ENCODE measurements at regions of chr6 and their contacts with region 1.

Region 1: DNA sequence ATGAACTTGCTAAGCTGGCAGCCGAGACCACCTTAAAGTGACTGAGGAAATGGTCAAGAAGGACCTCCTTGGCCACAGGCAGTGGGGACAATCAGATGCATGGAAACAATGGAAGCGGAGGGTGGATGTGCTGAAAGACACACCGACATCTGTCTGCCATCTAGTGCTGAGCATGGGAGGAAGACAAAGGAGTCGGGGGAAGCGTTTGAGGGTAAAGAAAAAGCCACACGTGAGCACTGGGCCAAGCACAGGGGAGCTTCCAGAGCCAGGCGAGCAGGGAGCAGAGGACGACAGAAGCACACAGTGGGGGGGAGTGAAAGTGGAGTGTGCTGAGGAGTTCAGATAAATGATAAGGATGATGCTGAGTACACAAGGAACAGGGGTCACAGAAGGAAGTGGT is 367.8 kb downstream of the ZFAND3 start:
- DNase-seq: peak in 3 of 10 donors; percentile 17 to 42 (median 37)
- H3K4me3 ChIP-seq: no peak overlapping the region
- H3K27ac ChIP-seq: peak overlapping the region in 7 of 59 donors; percentile 14 to 46 (median 29)
- H3K27me3 ChIP-seq: no peaks in the 10 kb centered on the region
- CTCF ChIP-seq: peak in 30 of 56 donors; percentile 7 to 62 (median 28)

Region 2: DNA sequence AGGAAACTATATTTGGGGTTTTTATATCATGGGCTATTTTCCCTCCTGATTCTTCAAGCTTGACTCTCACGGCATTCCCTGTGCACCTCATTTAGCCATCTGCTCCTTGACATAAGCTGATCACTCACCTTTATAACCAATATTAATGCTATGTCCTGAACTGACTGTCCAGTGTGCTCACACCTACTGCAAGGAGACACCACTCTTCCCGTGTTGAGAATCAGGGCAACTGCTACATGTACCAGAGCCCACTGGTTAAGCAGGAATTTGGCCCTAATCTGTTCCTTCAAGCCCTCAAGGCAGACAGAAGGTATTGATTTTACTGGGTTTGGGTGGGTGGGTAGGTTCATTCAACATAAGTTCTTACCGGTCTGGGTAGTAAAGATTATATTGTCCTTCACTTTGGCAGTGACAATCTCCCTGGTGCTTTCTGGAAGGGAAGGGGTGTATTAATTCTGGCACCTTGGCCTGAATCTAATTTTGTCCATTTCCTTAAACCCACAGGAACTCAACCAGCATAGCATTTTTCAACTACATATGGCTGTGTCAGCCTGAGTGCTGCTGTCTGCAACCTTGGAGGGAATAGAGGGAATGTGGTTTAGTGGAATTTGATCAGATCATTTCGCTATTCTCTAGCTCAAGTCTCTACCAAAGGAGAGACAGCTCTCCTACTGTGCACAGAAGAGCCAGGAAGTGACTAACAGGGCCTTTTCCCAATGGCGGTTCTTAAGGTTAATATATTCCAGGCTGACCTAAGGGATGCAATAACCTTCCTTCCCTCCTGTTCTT is 159.2 kb after region 1 on chr6:
- intact Hi-C with region 1: loop called in 1 of 2 experiments (anchors 10 kb)
- DNase-seq: no peak
- H3K4me3 ChIP-seq: no peak overlapping the region
- H3K27ac ChIP-seq: no peak overlapping the region
- H3K27me3 ChIP-seq: no peaks in the 10 kb centered on the region
- CTCF ChIP-seq: no peak

Measured in dorsolateral prefrontal cortex (tissue), 120 donors.